Esophagus muscularis mucosa (tissue), 4 donors: ENCODE measurements at regions of chr9 and their contacts with region 1.

Region 1: GRCh38 chr9:126558051-126558665 is 55.6 kb upstream of the LMX1B start:
- DNase-seq: no peak
- H3K4me3 ChIP-seq: no peak overlapping the region
- H3K27ac ChIP-seq: no peak overlapping the region
- H3K4me1 ChIP-seq: no peaks in the 10 kb centered on the region
- H3K27me3 ChIP-seq: peaks cover 0 to 17% (median 0%) of the 10 kb centered on the region in 4 donors
- CTCF ChIP-seq: peak; percentile 88 to 93 (median 90)
- EP300 ChIP-seq: no peak
- POLR2A ChIP-seq: no peak

Region 2: DNA sequence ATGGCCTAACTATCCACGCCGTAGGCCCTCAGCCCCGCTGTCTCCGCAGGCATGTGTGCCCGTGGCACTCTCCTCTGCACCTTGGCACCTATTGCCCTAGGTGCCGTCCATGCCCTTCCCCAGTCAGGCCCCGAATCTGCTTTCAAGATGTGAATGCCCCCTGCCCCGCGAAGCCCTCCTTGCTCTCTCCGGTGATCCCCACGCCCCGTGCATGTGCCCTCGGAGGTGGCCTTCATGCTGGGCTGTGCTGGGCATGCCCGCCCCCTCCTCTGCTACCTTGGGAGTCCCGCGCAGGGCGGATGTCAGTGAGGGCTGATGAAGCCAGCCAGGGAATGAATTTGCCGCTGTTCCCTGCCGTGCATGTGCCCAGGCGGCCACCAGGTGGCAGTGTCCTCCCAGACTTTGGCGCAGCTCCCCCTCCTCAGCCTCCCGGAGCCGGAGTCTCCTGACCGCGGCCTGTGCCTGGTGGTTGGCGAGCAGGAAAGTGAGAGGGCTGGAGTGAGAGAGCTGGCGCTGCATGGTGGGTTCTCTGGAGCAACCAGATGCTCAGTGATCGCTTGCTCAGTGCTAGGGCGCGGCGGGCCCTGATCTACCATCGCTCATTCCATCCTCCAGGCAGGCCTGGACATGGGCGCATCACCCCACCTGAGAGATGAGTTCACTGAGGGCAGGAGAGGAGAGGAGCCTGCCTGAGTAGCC is 57.3 kb before region 1 on chr9:
- intact Hi-C with region 1: loop called (anchors 2 kb)
- DNase-seq: no peak
- H3K4me3 ChIP-seq: no peak overlapping the region
- H3K27ac ChIP-seq: no peak overlapping the region
- H3K4me1 ChIP-seq: peaks cover 19 to 34% (median 31%) of the 10 kb centered on the region in 4 donors
- H3K27me3 ChIP-seq: no peaks in the 10 kb centered on the region
- CTCF ChIP-seq: peak in 2 of 3 experiments; percentile 91 to 95
- EP300 ChIP-seq: no peak
- POLR2A ChIP-seq: no peak

Region 3: DNA sequence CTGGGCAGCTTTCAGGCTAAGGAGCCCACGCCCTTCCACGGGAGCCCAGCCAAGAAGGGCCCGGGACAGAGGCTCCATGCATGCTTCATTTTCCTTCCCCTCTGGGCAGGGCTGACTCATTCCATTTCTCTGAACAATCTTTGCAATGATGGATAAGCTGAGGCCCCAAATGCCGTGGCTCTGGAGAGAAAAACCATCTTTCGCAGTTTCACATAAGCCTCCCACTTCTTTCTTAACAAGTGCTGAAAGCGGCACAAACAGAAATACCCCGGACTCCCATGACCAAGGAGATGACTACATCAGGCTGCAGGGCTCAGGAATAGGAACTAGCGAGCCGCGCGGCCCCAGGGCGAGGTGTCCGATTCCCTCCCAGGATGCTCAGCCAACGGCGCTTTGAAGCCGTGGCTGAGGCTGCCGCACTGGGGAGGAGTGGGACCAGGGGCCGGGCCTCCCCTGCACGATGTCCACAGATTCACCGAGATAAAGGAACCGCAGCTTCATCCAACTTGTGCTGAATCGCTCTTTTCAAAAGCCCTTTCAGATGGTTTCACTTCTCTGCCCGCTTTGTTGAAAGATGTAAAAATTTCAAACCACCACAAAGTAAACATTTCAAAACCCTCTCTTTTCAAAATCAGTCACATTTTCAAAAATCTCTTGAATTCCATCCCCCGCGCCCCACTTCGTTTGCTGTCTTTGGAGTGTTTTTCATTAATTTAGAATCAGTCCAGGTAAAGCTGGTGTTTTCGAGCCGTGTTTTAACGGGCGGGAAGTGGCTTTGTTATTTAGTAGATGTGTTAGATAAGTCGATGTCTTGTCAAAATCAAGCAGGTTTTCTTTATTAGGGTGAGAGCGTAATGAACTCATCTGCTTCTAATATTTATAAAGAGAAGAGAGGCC is 41.0 kb before region 1 on chr9:
- intact Hi-C with region 1: loop called (anchors 5 kb)
- DNase-seq: no peak
- H3K4me3 ChIP-seq: peak overlapping the region; percentile 43 to 61 (median 46)
- H3K27ac ChIP-seq: peak overlapping the region; percentile 59 to 77 (median 73)
- H3K4me1 ChIP-seq: peaks cover 24 to 60% (median 40%) of the 10 kb centered on the region in 4 donors
- H3K27me3 ChIP-seq: peaks cover 3 to 94% (median 48%) of the 10 kb centered on the region in 4 donors
- CTCF ChIP-seq: no peak
- EP300 ChIP-seq: no peak
- POLR2A ChIP-seq: no peak

Region 4: DNA sequence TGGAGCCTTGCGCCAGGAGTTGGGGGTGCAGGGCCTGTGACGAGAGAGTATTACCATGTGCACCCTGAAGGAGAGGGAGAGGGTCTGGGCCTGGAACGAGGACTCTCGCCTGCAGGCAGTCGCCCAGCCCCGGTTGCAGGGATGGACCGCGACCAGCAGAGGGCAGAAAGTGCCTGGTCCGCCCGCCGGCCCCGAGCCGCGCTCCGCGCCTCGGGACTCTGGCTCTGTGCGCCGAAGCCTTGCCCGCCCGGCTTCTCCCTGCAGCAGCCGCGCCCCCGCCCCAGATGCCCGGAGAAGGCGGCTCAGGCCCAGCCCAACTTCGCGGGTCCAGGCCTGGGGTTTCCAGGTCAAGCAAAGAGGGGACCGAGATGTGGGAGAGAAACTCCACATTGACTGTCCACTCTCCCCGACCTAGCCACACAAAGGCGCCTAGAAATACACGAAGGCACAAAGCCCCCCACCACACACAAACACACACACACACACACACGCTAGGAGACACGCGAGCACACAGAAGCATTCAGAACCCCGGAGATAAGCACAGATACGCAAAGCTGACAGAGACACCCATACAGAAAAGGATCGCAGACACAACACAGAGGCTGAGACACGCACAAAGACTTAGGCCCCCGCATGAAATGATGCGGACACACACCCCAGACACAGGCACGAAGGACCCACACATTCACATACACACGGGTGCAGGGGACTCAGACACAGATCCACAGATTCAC is 53.6 kb after region 1 on chr9:
- intact Hi-C with region 1: no loop called
- DNase-seq: no peak
- H3K4me3 ChIP-seq: peak overlapping the region; percentile 40 to 58 (median 48)
- H3K27ac ChIP-seq: no peak overlapping the region
- H3K4me1 ChIP-seq: peaks cover 34 to 59% (median 53%) of the 10 kb centered on the region in 4 donors
- H3K27me3 ChIP-seq: peaks cover 15 to 85% (median 52%) of the 10 kb centered on the region in 4 donors
- CTCF ChIP-seq: peak; percentile 68 to 89 (median 79)
- EP300 ChIP-seq: no peak
- POLR2A ChIP-seq: no peak